Ovary (tissue), 10 donors: ENCODE measurements at regions of chr10 and their contacts with region 1.

Region 1: GRCh38 chr10:55550241-55550640 is 749.2 kb upstream of the PCDH15 start:
- DNase-seq: no peak
- H3K4me3 ChIP-seq: no peak overlapping the region
- H3K27ac ChIP-seq: no peak overlapping the region
- H3K4me1 ChIP-seq: no peaks in the 10 kb centered on the region
- H3K27me3 ChIP-seq: no peaks in the 10 kb centered on the region
- CTCF ChIP-seq: no peak
- EP300 ChIP-seq: no peak
- POLR2A ChIP-seq: no peak

Region 2: GRCh38 chr10:55191236-55191858 is 358.9 kb before region 1 on chr10:
- intact Hi-C with region 1: loop called in 1 of 4 experiments (anchors 10 kb)
- DNase-seq: no peak
- H3K4me3 ChIP-seq: no peak overlapping the region
- H3K27ac ChIP-seq: no peak overlapping the region
- H3K4me1 ChIP-seq: no peaks in the 10 kb centered on the region
- H3K27me3 ChIP-seq: peaks cover 3% of the 10 kb centered on the region
- CTCF ChIP-seq: no peak
- EP300 ChIP-seq: no peak
- POLR2A ChIP-seq: no peak